Activated T-helper 2 cell treated with anti-CD3 and anti-CD28 coated beads, Interferon-gamma antibody, Interleukin-2, Interleukin-4, amounts not matched to agents 10 μg/mL and 5 μg/mL and 100 μg/mL, durations not matched to agents 14 hours and 24 hours and 36 hours (primary cell): ENCODE measurements at regions of chr12 and their contacts with region 1.

Region 1: DNA sequence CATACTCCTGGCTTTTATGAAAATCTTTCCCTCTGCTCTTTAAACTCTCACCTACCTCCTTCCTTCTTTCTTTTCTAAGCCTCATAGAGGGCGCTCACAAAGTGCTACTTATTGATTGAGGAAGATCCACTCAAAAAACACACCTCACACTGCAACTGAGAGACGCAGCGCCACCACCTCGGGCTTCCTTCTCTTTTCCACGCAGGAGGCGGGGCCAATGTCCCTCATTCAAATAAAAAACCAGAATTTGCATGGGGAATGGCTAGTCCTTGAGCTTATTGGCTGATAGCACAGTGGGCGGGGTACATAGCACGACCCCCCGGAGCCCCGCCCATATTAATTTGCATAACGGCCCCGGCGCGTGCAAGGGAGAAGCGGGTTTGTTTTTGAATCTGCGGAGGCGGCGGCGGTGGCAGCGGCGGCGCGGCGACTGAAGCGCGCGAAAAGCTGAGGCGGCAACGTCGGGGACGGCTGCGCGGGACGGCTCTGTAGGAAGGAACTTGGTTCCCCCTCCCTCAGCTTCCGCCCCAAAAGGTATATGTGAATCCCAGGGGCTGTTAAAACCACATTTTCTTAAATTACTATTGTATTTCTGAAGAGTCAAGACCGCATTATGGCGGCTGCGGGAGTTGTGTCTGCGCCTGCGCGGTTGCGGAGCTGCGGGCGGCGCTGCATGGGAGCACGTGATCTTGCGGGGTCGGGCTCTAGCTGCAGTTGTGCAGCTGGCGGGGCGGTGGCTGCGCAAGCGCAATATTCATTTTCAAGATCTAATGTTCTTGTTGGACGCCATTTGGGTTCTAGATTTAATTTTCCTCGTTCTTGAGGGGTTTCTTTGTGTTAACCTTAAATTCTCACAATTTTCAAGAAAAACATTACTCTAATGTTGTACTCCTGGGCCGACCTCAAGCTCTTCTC is at the start of gene ATF7IP:
- DNase-seq: peak; percentile 96
- H3K4me3 Mint-ChIP-seq: peak within 1 kb of the TSS; percentile 88
- H3K27ac Mint-ChIP-seq: peak within 1 kb of the TSS; percentile 96
- H3K4me1 Mint-ChIP-seq: peaks cover 32% of the 10 kb centered on the region
- H3K27me3 Mint-ChIP-seq: no peaks in the 10 kb centered on the region
- total RNA-seq, gene ATF7IP: 81.2 and 82.1 TPM in 2 replicates

Region 2: DNA sequence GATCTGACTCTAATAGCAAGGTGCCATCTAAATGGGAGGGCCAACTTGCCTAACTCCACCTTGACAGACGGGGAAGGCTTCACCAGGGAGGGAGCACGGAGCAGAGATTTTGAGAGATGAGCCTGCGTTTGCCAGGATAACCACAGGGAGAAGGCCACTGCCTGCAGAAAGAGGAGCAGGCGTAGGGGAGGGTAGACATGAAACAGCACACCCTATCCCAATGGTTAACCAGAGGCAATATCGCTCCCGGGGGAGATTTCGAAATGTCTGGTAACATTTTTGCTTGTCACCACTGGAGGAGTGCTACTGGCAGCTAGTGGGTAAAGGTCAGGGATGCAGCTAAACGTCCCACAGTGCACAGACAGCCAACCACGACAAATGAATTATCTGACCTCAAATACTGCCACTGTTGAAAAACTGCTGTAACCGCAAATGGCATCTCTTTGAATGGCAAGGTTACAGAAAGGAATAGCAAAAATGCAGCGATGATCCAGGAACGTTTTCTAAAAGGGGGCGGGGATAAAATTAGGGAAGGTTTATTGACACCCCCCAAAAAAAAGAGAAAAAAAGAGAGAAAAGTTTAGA is 126.1 kb before region 1 on chr12:
- intact Hi-C with region 1: loop called (anchors 1 kb)
- DNase-seq: no peak
- H3K4me3 Mint-ChIP-seq: peak overlapping the region; percentile 73
- H3K27ac Mint-ChIP-seq: peak overlapping the region; percentile 86
- H3K4me1 Mint-ChIP-seq: peaks cover 25% of the 10 kb centered on the region
- H3K27me3 Mint-ChIP-seq: no peaks in the 10 kb centered on the region

Region 3: DNA sequence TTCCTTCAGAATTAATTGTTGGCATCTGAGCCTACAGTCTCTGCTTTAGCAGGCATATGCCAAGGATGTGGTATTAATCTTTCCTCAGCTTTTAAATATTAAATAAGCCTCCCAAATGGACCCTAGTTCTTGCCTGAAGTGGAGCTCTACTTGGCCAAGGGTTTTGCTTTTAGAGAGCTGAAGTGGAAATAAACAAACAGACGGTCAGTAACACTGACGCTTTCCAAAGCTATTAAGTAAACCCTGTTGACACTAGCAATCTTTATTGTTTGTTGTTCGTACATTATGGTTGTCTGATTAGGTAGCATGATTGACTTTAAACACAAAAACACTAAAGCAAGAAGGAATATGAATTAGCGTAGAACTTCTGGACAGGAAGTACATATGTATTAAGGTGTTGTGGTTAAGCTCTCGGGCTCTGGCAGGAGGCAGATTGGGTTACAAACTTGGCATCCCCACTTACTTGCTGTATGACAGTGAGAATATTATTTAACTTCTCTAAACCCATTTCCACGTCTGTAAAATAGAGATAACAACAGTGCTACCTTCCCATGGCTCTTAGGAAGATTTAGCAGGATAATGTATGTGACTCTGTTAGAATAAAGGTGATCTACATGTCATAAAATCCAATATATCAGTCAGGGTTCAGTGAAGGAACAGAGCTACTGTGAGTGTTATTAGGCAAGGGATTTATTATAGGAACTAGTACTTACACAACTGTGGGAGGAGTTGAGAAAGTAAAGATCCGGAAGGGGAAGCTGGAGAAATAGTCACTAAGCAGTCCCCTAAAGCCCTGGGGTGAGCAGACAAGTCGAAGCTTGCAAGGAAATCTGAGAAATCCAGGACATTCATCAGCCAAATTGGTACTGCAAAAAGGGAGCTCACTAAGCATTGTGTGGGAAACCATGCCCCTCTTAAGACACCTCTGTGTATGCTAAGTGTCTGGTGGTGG is 92.3 kb before region 1 on chr12:
- intact Hi-C with region 1: no loop called
- DNase-seq: no peak
- H3K4me3 Mint-ChIP-seq: no peak overlapping the region
- H3K27ac Mint-ChIP-seq: no peak overlapping the region
- H3K4me1 Mint-ChIP-seq: peaks cover 20% of the 10 kb centered on the region
- H3K27me3 Mint-ChIP-seq: no peaks in the 10 kb centered on the region

Region 4: DNA sequence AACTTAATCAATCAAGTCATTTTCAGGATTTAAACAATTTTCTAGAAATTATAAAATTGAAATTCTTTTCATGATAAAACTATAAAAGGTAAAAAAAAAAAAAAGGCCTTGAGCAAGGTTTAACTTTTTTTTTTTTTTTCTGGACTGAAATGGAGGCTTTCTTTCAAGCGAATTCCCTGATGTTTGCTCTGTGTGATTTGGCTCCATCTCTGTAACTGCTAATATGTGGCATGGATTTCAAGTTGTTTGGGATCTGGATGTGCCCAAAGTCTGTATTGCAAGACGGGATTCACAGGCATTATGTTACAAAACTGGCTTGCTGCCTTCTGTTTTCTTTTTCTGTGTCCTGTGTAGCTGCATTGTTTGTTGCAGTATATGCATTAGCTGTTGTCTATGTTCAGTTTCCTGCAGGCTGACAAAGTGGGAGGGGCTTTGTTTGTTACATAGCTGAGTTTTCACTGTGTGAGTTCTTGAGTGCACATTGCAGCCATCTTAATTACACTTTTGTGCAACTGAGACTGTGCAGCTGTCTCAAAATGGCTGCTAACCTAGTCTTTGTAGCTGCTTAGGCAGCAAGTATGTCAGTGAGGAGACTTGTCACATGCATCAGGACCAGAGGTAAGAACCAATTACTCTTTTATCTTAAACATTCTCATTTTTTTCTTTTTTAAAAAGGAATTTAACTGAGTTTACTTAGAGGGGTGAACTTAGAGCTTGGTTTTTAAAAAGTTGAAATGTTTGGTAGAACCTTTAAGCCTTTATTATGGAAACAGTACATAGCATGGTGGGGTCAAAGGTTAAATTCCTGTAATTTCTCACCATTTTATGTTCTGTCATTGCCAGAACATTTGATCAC is 19.5 kb after region 1 on chr12:
- intact Hi-C with region 1: loop called (anchors 1 kb)
- DNase-seq: peak; percentile 72
- H3K4me3 Mint-ChIP-seq: peak overlapping the region; percentile 87
- H3K27ac Mint-ChIP-seq: peak overlapping the region; percentile 86
- H3K4me1 Mint-ChIP-seq: peaks cover 45% of the 10 kb centered on the region
- H3K27me3 Mint-ChIP-seq: no peaks in the 10 kb centered on the region

Region 5: DNA sequence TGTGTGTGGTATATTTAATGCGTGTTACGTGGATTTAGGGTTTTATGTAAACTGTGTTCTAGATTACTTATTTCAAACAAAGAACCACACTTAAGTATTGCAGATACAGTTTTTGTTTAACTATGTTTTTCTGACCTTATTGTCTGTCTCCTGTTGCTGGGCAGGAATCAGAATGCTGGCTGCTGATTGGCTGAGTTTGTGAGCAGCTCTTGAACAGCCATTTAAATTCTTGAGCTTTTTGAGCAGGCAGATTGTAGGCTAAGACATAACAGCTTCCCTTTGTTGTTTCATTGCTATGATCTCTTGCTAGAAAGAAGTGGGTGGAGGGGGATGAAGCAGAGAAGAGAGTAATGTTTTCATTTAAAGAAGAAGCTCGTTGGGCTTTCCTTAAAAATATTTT is 52.2 kb after region 1 on chr12:
- intact Hi-C with region 1: loop called (anchors 1 kb)
- DNase-seq: peak; percentile 64
- H3K4me3 Mint-ChIP-seq: peak overlapping the region; percentile 77
- H3K27ac Mint-ChIP-seq: peak overlapping the region; percentile 92
- H3K4me1 Mint-ChIP-seq: peaks cover 42% of the 10 kb centered on the region
- H3K27me3 Mint-ChIP-seq: no peaks in the 10 kb centered on the region

Region 6: DNA sequence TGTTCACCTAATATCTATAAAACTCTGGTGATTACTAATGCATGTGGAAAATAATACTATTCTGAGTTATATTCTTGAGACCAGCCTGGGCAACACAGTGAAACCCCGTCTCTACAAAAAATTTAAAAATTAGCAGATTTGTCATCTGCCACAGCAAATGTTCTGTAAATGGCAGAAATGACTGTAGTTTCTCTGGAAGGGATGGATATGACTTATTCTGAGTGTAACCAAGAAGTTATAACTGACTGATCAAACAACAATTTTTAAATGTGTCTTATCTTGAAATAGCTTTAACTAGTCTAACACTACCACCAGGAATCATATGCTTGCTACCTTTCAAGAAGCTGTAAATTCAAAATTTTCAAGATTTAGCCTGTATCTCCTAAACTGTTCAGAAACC is 113.5 kb after region 1 on chr12:
- intact Hi-C with region 1: loop called (anchors 2 kb)
- DNase-seq: no peak
- H3K4me3 Mint-ChIP-seq: no peak overlapping the region
- H3K27ac Mint-ChIP-seq: peak overlapping the region; percentile 38
- H3K4me1 Mint-ChIP-seq: peaks cover 10% of the 10 kb centered on the region
- H3K27me3 Mint-ChIP-seq: no peaks in the 10 kb centered on the region